ENCODE measurements at regions of chr1 and their contacts with region 1.

Region 1: DNA sequence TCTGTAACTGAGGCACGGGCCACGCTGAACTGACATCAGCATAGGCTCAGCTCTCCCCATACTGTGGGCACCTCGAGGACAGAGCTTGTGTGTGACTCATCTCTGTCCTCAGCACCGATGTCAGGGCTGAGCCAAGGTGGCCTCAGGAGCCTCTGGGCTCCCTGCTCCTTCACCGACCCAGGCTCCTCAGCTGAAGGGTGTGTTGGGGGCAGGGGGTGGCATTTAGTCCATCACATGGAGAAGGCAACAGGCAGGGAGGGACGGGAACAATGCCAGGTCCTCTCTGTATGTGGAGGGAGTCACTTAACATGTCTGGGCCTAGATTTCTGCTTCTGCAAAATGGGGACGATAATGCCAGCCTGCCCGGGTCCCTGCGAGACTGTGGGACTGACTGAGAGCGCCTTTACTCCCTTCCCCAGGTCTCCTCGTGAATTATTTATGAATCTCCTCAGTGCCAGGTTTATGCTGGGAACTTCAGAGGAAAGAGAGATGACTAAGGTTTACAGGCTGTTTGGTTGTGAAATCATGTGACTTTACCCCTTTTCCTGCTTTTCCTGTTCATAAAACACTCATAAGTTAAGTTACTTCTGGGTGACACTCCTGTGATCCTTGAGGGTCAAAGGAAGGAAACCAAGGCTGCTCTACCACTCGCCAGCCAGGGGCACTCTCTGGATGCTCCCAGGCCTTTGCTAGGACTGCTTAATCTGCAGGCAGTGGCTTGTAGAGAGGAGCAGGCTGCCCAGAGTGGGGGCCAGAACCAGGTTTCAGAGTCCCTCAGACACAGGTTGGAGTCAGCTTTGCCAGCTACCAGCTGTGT is 16.2 kb downstream of the TTC39A start:
- DNase-seq: no peak
- H3K4me3 ChIP-seq: no peak overlapping the region
- H3K4me1 ChIP-seq: no peaks in the 10 kb centered on the region
- H3K27me3 ChIP-seq: no peaks in the 10 kb centered on the region

Region 2: DNA sequence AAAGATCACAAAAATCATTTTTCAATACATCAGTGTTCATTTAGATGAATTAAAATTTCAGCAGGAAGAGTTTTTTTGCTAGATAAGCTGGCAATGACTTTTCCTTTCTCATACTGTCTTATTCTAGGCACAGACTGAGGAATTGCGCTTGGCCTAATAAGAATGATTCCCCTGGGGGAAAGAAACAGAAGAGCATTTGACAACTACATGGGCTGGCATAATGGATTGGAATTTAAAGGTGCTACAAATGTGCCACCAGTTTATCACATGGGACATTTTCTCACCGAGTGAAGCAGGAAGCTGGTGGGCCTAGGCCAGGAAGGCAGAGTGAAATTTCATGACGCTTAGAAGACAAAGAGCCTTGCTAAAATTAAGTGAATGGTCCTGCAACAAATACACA is 304.8 kb before region 1 on chr1:
- in situ Hi-C with region 1: no loop called
- DNase-seq: no peak
- H3K4me3 ChIP-seq: no peak overlapping the region
- H3K4me1 ChIP-seq: no peaks in the 10 kb centered on the region
- H3K27me3 ChIP-seq: no peaks in the 10 kb centered on the region

Region 3: GRCh38 chr1:51253691-51254090 is 60.5 kb before region 1 on chr1:
- in situ Hi-C with region 1: loop called (anchors 10 kb)
- DNase-seq: no peak
- H3K4me3 ChIP-seq: no peak overlapping the region
- H3K4me1 ChIP-seq: no peaks in the 10 kb centered on the region
- H3K27me3 ChIP-seq: no peaks in the 10 kb centered on the region

Measured in HAP-1 (cell line).